ENCODE measurements at regions of chr14 and their contacts with region 1.

Region 1: GRCh38 chr14:35079742-35080141 is 33.7 kb downstream of the FAM177A1 start:
- DNase-seq: no peak
- ATAC-seq: no peak
- H3K4me3 ChIP-seq: no peak overlapping the region
- H3K27ac ChIP-seq: no peak overlapping the region
- H3K4me1 ChIP-seq: no peaks in the 10 kb centered on the region
- H3K27me3 ChIP-seq: no peaks in the 10 kb centered on the region
- CTCF ChIP-seq: no peak

Region 2: DNA sequence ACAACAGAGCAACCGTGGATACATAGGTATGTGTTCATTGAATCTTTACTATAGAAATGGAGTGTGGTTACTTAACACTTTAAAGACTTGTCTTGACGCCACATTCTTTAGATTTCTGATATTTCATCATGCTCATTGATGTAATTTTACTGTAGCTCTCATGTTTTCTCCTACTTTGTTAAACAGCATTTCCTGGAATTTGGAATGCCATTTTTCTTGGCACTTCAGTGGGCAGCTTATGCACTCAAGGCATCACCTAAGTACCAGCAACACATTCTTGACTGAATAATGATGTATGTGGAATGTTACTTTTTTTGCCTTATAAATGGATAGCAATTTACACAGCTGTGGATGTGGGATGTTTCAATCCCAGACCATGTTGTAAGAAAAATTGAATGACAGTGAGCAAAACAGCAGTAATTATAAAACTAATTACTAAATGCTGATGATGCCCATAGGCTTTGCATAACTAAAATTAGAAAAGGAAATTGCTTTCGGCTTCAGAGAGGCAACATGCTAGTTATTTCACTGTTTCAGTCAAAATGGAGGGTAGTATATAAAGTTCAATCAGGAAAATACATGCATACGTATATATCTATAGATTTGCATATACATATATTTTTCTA is 1842.5 kb before region 1 on chr14:
- intact Hi-C with region 1: no loop called
- DNase-seq: no peak
- ATAC-seq: no peak
- H3K4me3 ChIP-seq: no peak overlapping the region
- H3K27ac ChIP-seq: no peak overlapping the region
- H3K4me1 ChIP-seq: no peaks in the 10 kb centered on the region
- H3K27me3 ChIP-seq: no peaks in the 10 kb centered on the region
- CTCF ChIP-seq: no peak

Region 3: GRCh38 chr14:35020713-35021112 is 59.0 kb before region 1 on chr14:
- intact Hi-C with region 1: loop called in 1 of 2 experiments (anchors 10 kb)
- DNase-seq: no peak
- ATAC-seq: no peak
- H3K4me3 ChIP-seq: no peak overlapping the region
- H3K27ac ChIP-seq: no peak overlapping the region
- H3K4me1 ChIP-seq: no peaks in the 10 kb centered on the region
- H3K27me3 ChIP-seq: no peaks in the 10 kb centered on the region
- CTCF ChIP-seq: no peak

Measured in psoas muscle (tissue), 8 donors.